GM23248 (cell line): ENCODE measurements at regions of chr5 and their contacts with region 1.

Region 1: DNA sequence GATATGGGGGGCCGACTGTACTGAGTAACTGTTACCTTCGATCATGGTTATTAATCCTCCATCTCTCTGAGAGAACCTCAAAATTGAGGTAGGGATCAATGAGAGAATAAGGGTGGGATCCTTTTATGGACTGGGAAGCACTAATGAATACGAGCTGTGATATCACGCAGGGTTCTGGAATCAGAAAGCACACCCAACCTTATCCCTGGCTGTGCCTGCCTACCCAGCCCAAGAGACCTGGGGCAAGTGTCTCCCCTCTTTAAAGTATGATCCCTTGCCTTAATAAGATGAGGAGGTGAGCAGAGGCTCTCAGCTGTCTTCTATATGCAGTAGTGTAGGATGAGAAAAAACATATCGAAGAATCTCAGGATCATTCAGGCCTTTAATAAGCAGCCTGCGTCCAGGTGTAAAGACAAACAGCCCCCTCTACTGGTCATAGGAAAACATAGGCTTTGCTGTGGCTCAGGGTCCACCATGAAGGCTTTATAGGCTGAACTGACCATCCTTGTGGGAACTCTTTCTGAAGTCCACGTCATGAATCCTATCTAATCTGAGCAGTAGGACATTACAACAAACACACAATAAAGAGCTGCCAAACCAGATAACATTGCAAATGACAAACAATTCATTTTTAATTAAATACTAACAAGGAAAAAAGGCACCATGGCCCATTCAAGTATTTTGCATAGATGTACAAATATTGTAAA is 16.8 kb downstream of the NIPAL4 start:
- DNase-seq: peak; percentile 87
- H3K4me3 ChIP-seq: no peak overlapping the region
- H3K27ac ChIP-seq: no peak overlapping the region
- H3K4me1 ChIP-seq: peaks cover 13% of the 10 kb centered on the region
- H3K27me3 ChIP-seq: no peaks in the 10 kb centered on the region

Region 2: DNA sequence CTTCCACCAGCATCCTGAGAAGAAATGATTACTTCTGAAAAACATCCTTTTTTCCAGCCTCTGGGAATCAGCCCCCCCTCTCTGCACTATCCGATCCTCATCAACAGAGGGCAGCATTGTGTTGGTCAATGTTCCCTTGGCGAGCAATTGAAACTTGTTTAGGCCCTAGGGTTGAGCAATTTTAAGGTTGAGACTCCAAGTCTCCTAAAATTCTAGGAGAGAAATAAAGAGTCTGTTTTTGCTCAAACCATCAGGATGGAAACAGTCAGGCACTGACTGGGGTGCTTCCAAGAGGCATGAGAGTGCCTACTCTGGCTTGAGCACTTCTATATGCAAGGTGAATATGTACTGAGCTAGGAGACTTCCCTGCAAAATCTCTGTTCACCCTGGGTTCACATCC is 223.3 kb before region 1 on chr5:
- in situ Hi-C with region 1: loop called (anchors 10 kb)
- DNase-seq: peak; percentile 80
- H3K4me3 ChIP-seq: no peak overlapping the region
- H3K27ac ChIP-seq: no peak overlapping the region
- H3K4me1 ChIP-seq: peaks cover 7% of the 10 kb centered on the region; the same call in 1 of the 2 replicates
- H3K27me3 ChIP-seq: no peaks in the 10 kb centered on the region

Region 3: GRCh38 chr5:157366741-157367674 is 109.8 kb before region 1 on chr5:
- in situ Hi-C with region 1: loop called (anchors 10 kb)
- DNase-seq: peak; percentile 84
- H3K4me3 ChIP-seq: no peak overlapping the region
- H3K27ac ChIP-seq: no peak overlapping the region
- H3K4me1 ChIP-seq: peaks cover 23% of the 10 kb centered on the region
- H3K27me3 ChIP-seq: no peaks in the 10 kb centered on the region

Region 4: DNA sequence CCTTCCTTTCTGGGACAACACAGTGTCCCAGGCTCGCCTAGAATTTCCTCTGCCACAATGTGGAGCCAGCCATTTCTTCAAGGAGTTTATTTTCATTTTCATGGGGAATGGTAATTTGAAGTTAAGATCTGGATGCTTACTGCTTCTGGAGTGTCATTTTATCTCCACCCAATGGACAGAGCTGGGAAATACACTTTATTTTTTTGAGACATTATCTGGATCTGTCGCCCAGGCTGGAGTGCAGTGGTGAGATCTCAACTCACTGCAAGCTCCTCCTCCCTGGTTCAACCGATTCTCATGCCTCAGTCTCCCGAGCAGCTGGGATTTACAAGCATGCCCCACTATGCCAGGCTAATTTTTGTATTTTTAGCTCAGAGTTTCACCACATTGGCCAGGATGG is 241.7 kb after region 1 on chr5:
- in situ Hi-C with region 1: loop called (anchors 25 kb)
- DNase-seq: peak; percentile 73
- H3K4me3 ChIP-seq: no peak overlapping the region
- H3K27ac ChIP-seq: no peak overlapping the region
- H3K4me1 ChIP-seq: peaks cover 21% of the 10 kb centered on the region
- H3K27me3 ChIP-seq: no peaks in the 10 kb centered on the region

Region 5: GRCh38 chr5:158100373-158100888 is 623.6 kb after region 1 on chr5:
- in situ Hi-C with region 1: no loop called
- DNase-seq: peak; percentile 55
- H3K4me3 ChIP-seq: no peak overlapping the region
- H3K27ac ChIP-seq: no peak overlapping the region
- H3K4me1 ChIP-seq: no peaks in the 10 kb centered on the region
- H3K27me3 ChIP-seq: no peaks in the 10 kb centered on the region